SK-N-SH (cell line): ENCODE measurements at regions of chr18 and their contacts with region 1.

Region 1: GRCh38 chr18:62131301-62131909 is 55.5 kb downstream of the PIGN start:
- DNase-seq: peak; percentile 50
- H3K4me3 ChIP-seq: no peak overlapping the region; a peak in 1 of 4 replicates
- H3K27ac ChIP-seq: no peak overlapping the region
- H3K4me1 ChIP-seq: peaks cover 0 to 4% of the 10 kb centered on the region in 2 experiments; a peak in 2 of 4 replicates
- H3K27me3 ChIP-seq: no peaks in the 10 kb centered on the region
- CTCF ChIP-seq: peak; percentile 99
- EP300 ChIP-seq: no peak
- RAD21 ChIP-seq: peak; percentile 99

Region 2: GRCh38 chr18:61551586-61551985 is 579.8 kb before region 1 on chr18:
- CTCF ChIA-PET with region 1: interaction called, 62 read pairs
- POLR2A ChIA-PET with region 1: no interaction called
- DNase-seq: peak; percentile 74
- H3K4me3 ChIP-seq: no peak overlapping the region
- H3K27ac ChIP-seq: 0 out of 4 replicates have a peak overlapping the region, but pooled peaks of 1 of the 2 experiments have one; percentile 11
- H3K4me1 ChIP-seq: no peaks in the 10 kb centered on the region; a peak in 1 of 4 replicates
- H3K27me3 ChIP-seq: no peaks in the 10 kb centered on the region
- CTCF ChIP-seq: peak; percentile 91
- EP300 ChIP-seq: no peak
- RAD21 ChIP-seq: peak; percentile 88

Region 3: DNA sequence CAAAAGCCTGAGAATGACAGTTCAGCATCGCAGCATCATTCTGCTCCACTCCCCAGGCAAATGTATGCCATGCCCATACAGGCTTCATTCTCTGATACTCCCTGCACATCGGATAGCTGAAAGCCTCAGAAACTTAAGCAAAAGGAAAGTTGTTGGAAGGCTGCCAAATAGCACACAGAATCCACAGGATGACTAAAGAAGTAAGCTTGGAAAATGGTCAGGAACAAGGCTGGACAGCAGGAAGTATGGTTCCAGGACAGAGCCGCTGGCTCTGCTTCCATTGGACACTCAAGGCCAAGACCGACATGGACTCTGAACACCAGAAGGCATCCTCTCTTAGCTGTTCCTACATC is 541.7 kb before region 1 on chr18:
- CTCF ChIA-PET with region 1: interaction called, 22 read pairs
- POLR2A ChIA-PET with region 1: no interaction called
- DNase-seq: no peak
- H3K4me3 ChIP-seq: no peak overlapping the region
- H3K27ac ChIP-seq: peak overlapping the region in 1 of 2 experiments; percentile 36; a peak in 1 of 4 replicates
- H3K4me1 ChIP-seq: peaks cover 0 to 25% of the 10 kb centered on the region in 2 experiments; a peak in 2 of 4 replicates
- H3K27me3 ChIP-seq: no peaks in the 10 kb centered on the region
- CTCF ChIP-seq: no peak
- EP300 ChIP-seq: no peak
- RAD21 ChIP-seq: no peak

Region 4: DNA sequence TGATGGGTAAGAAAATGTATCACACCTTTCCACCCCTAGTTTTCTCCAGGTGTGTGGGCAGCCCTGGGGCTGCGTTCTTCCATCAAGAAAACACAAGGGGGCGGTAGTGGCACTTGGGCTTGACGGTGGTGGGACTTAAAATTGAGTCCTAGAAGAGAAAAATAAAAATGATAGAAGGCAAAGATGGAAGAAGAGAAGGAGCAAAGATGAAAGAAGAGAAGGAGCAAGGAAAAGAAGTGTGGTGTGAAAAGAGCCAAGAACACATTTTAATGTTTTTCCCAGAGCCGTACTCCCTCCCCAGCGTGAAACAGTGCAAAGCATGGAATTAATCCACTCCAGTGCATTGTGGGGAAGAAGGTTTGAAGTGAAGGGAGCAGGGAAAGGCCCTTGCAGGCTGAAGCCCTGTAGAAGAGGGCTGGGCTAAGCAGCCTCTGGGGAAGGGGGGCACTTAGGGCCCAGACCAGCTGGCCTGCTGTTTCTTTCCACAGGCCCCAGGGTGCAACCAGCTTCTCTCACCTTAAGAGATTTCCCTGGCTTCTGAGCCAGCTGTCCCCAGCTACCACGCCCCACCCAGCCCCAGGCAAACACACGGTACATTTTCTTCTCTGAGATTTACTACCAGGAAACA is 495.4 kb before region 1 on chr18:
- CTCF ChIA-PET with region 1: interaction called, 27 read pairs
- POLR2A ChIA-PET with region 1: no interaction called
- DNase-seq: peak; percentile 66
- H3K4me3 ChIP-seq: no peak overlapping the region; a peak in 1 of 4 replicates
- H3K27ac ChIP-seq: peak overlapping the region in 1 of 2 experiments; percentile 53; a peak in 2 of 4 replicates
- H3K4me1 ChIP-seq: peaks cover 9 to 11% of the 10 kb centered on the region in 2 experiments; a peak in 2 of 4 replicates
- H3K27me3 ChIP-seq: no peaks in the 10 kb centered on the region
- CTCF ChIP-seq: peak; percentile 95
- EP300 ChIP-seq: 0 out of 4 replicates have a peak, but pooled peaks of 1 of the 2 experiments have one; percentile 4
- RAD21 ChIP-seq: peak; percentile 87

Region 5: DNA sequence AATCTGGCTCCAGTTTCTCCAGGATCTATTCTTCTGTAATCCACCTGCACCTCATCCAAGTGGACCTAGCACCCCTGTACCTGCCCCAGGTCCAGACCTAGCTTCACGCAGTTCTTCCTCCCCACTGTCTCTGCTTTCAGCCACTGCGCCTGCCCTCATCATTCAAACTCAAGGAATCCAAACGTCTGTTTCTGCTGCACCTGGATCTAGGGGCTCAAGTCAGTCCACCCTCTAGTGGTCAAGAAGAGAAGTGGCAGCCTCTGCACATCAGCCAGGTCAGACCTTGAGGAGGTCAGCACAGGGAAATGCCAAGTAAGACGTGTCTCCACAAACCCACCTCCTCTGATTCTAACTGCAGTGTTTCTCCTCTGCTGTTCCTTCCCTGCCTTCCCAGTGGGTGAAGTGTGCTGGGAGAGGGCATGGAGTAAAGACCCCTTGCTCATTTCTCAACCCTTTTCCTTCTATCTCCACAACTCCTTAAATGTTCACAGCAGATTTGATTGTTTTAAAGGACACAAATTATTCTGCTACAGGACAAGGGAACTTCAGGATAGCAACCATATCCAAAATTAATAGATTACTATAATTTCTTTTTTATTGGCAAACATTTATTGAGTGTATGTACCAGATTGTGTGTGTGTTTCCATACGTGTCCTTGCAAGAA is 229.9 kb before region 1 on chr18:
- CTCF ChIA-PET with region 1: interaction called, 13 read pairs
- POLR2A ChIA-PET with region 1: no interaction called
- DNase-seq: peak; percentile 73
- H3K4me3 ChIP-seq: no peak overlapping the region; a peak in 1 of 4 replicates
- H3K27ac ChIP-seq: no peak overlapping the region
- H3K4me1 ChIP-seq: peaks cover 0 to 7% of the 10 kb centered on the region in 2 experiments; a peak in 2 of 4 replicates
- H3K27me3 ChIP-seq: no peaks in the 10 kb centered on the region
- CTCF ChIP-seq: peak; percentile 89
- EP300 ChIP-seq: no peak
- RAD21 ChIP-seq: peak; percentile 82

Region 6: DNA sequence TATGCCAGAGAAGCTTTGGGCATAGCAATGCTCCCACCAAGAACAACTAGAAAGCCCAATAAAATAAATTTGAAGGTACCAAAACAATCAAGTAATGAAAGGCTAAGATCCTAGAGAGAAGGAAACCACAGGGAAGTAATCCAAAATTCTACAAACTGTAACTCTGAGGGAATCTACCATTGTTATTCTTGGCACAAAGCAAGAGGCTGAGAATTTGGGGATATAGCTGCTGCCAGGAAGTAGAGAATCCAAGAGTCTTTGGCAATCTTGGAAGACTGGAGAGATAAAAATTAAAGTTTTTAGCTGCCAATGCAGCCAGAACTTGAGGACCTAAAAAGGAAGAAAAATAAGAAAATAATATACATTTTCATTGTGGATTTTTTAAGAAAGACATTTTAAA is 13.1 kb before region 1 on chr18:
- CTCF ChIA-PET with region 1: interaction called, 11 read pairs
- POLR2A ChIA-PET with region 1: no interaction called
- DNase-seq: no peak
- H3K4me3 ChIP-seq: no peak overlapping the region
- H3K27ac ChIP-seq: peak overlapping the region in 1 of 2 experiments; percentile 6; a peak in 1 of 4 replicates
- H3K4me1 ChIP-seq: no peaks in the 10 kb centered on the region
- H3K27me3 ChIP-seq: no peaks in the 10 kb centered on the region
- CTCF ChIP-seq: no peak
- EP300 ChIP-seq: no peak
- RAD21 ChIP-seq: no peak